AG04449 (cell line): ENCODE measurements at regions of chr4 and their contacts with region 1.

Region 1: DNA sequence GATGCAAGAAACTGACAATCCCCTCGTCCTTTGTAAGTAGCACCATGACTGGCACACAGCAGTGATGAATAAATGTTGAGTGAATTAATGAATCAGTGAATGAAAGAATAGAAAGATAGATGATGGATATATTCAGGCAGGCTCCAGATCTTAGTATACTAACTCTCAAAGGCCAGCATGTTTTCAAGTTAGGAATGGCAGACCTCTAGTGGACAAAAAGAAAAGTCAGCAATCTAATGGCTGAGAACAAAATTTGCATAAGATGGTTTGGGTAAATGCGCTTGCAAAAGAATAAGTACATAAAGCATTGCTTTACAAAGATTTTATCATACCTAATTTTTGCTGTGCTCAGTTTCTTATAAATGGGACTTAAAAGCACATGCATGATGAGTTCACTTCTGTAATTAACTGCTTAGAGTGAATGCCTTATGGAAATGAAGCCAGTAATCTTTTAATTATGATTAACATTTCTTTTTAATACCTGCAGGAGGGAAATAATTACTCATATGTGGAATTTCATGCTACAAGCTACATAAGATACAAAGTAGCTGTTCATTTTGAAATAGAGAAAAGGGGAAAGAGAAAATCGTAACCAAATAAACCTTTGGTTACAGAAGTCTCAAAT is 126.9 kb upstream of the GPRIN3 start:
- DNase-seq: no peak
- H3K4me3 ChIP-seq: no peak overlapping the region
- CTCF ChIP-seq: peak; percentile 44

Region 2: DNA sequence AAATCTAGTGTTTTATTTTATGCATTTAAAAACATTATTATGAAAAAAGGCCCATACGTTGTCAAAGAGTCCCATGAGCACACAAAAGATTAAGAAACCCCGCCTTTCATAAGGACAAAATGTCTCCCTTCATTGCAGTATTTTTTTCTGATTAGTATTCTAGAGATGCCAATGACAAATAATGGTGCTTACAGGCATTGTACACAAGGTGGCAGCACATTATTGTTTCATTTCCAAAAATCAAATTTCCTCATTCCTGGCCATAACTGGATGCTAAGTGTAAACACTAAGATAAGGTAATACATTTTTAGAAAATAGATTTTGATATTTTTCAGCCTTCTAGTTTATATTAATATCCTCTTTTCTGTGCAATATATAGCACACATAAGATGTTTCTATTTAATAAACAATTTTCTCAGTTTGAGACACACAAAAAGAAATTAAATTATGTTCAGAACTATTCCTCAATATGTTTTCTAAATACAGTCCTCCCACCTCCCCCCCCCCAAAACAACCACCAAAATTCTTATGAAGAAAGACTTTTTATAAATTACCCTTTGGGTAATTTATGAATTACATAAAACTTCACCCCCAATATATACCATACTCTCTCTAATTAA is 275.5 kb before region 1 on chr4:
- CTCF ChIA-PET with region 1: interaction called, 13 read pairs
- POLR2A ChIA-PET with region 1: no interaction called
- DNase-seq: no peak
- H3K4me3 ChIP-seq: no peak overlapping the region
- CTCF ChIP-seq: peak; percentile 62

Region 3: GRCh38 chr4:89226665-89227574 is 207.6 kb before region 1 on chr4:
- CTCF ChIA-PET with region 1: interaction called, 47 read pairs
- POLR2A ChIA-PET with region 1: no interaction called
- DNase-seq: no peak
- H3K4me3 ChIP-seq: no peak overlapping the region
- CTCF ChIP-seq: peak; percentile 73

Region 4: DNA sequence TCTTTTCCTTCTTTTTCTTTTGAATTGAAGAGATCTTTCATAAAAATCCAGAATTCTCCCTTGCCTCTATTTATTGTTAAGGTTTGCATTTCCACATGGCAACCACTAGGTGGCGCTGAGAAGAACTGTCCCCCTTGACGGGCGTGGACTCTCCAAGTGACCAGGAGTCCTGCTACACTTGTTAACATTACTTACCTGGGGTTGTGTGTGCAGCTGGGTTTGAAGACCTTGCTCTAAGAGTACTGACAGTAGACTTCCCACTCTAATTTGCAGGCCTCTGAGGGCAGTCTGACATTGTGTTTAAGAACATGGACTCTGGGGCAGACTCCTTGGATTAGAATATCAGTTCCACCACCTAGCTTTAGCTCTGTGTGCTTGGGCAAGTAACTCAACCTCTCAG is 179.6 kb before region 1 on chr4:
- CTCF ChIA-PET with region 1: interaction called, 12 read pairs
- POLR2A ChIA-PET with region 1: no interaction called
- DNase-seq: no peak
- H3K4me3 ChIP-seq: no peak overlapping the region
- CTCF ChIP-seq: peak; percentile 62